ENCODE measurements at regions of chr1 and their contacts with region 1.

Region 1: DNA sequence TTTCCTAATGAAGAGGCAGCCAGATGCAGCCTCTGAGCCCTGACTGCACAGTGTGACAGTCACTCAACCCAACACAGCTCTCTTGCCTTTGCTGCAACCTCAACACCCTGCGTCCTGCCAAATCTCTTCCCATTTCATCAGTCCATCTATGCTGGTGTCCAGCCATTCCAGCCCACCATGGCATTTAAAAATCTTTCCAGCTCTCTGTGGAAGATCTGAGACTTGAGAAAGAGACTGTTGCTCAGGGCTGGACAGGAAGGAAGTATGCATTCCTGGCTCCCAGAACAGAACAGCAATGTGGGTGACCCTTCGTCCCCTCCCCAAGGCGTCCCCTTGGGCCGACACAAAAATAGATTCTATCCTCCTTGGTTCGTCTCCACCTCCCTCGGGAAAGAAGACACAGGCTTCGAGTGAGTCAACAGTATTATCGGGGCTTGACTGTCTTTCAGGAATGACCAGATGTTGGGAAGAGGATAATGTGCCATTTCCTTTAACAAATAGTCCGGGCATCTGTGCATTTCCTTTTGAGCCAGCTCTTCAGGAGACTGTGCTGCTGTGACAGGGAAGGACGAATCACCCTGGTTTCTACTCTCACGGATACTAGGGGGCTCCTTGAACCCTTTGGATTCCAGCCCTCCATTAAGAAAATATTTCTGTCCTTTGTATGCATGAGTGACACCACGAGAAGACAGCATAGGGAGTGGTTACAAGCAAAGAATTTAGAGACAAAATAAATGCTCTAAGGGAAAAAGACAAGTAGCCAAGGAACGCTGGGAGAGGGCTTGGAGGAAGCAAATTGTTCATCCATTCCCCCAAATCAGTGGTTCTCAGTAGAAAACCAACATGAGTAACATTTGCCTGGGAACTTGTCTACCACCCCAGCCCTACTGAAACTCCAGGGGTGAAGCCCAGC is 111.4 kb upstream of the CDC42BPA start:
- DNase-seq: no peak
- ATAC-seq: peak; percentile 56
- H3K4me3 ChIP-seq: no peak overlapping the region
- H3K27ac ChIP-seq: no peak overlapping the region
- H3K4me1 ChIP-seq: peaks cover 38% of the 10 kb centered on the region
- H3K27me3 ChIP-seq: peaks cover 0 to 11% of the 10 kb centered on the region in 2 experiments; a peak in 2 of 5 replicates
- CTCF ChIP-seq: no peak
- EP300 ChIP-seq: no peak
- POLR2A ChIP-seq: no peak
- RAD21 ChIP-seq: no peak

Region 2: DNA sequence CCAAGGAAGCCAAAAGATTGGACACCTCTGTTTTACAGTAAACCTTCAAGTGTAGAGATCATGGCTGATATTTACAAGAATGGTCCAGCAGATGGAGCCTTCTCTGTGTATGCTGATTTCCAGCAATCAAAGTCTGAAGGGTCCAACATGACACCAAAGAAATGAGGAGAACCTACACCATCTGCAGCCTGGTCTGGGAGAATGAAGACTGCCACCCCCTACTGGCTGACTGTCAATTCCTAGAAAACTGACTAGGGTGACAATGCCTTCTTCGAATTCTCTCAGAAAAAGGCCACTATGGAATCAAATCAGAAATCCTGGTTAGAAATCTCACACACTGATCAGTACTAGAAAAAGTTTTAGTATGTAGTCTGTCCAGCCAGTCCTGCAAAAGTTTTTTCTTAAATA is 194.7 kb before region 1 on chr1:
- CTCF ChIA-PET with region 1: no interaction called
- POLR2A ChIA-PET with region 1: no interaction called
- in situ Hi-C with region 1: loop called (anchors 5 kb)
- intact Hi-C with region 1: no loop called
- DNase-seq: peak; percentile 83
- ATAC-seq: peak; percentile 97
- H3K4me3 ChIP-seq: no peak overlapping the region
- H3K27ac ChIP-seq: no peak overlapping the region
- H3K4me1 ChIP-seq: no peaks in the 10 kb centered on the region
- H3K27me3 ChIP-seq: no peaks in the 10 kb centered on the region
- CTCF ChIP-seq: peak; percentile 71
- EP300 ChIP-seq: no peak
- POLR2A ChIP-seq: no peak
- RAD21 ChIP-seq: peak; percentile 52; the same call in 1 of the 2 replicates